Activated T-helper 2 cell treated with anti-CD3 and anti-CD28 coated beads, Interferon-gamma antibody, Interleukin-2, Interleukin-4, amounts not matched to agents 10 μg/mL and 5 μg/mL and 100 μg/mL, durations not matched to agents 14 hours and 24 hours and 36 hours (primary cell): ENCODE measurements at regions of chr12 and their contacts with region 1.

Region 1: GRCh38 chr12:6167327-6168259 is 32.6 kb upstream of the CD9 start:
- DNase-seq: peak; percentile 24
- H3K4me3 Mint-ChIP-seq: no peak overlapping the region
- H3K27ac Mint-ChIP-seq: peak overlapping the region; percentile 93
- H3K4me1 Mint-ChIP-seq: peaks cover 24% of the 10 kb centered on the region
- H3K27me3 Mint-ChIP-seq: peaks cover 5% of the 10 kb centered on the region

Region 2: DNA sequence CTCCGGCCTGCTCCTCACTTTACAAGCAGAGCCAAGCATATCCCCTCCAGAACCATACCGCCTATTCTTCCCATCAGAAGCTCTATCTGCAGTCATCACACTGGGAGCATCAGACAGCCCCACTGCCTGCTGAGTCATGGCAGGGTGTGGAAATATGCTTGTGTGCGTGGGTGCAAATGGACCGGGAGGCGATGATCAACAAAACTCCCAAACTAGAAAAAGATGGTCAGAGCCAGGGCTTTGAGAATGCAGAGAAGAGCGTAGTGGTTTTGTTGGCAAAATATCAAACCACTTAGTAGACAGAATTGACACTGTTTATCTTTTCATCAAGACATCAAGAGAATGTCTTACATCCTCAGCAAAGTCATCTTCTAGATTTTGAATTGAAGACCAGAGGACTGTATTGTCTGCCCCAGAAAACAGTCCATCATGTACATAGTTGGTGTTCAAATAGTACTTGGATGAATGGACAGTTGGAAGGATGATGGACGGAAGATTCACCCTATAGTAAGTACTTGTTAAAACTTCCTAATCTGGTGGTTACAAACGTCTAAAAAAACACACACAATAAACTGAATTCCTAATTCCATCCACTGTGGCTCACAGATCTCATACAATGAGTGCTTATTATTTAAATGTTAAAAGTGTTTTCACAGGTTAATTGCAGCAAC is 98.0 kb before region 1 on chr12:
- intact Hi-C with region 1: loop called (anchors 2 kb)
- DNase-seq: no peak
- H3K4me3 Mint-ChIP-seq: no peak overlapping the region
- H3K27ac Mint-ChIP-seq: peak overlapping the region; percentile 74
- H3K4me1 Mint-ChIP-seq: peaks cover 26% of the 10 kb centered on the region
- H3K27me3 Mint-ChIP-seq: peaks cover 52% of the 10 kb centered on the region

Region 3: GRCh38 chr12:6145564-6145963 is 22.0 kb before region 1 on chr12:
- intact Hi-C with region 1: no loop called
- DNase-seq: no peak
- H3K4me3 Mint-ChIP-seq: no peak overlapping the region
- H3K27ac Mint-ChIP-seq: no peak overlapping the region
- H3K4me1 Mint-ChIP-seq: peaks cover 17% of the 10 kb centered on the region
- H3K27me3 Mint-ChIP-seq: no peaks in the 10 kb centered on the region

Region 4: GRCh38 chr12:6205144-6205539 is 37.5 kb after region 1 on chr12:
- intact Hi-C with region 1: no loop called
- DNase-seq: no peak
- H3K4me3 Mint-ChIP-seq: no peak overlapping the region
- H3K27ac Mint-ChIP-seq: no peak overlapping the region
- H3K4me1 Mint-ChIP-seq: peaks cover 9% of the 10 kb centered on the region
- H3K27me3 Mint-ChIP-seq: peaks cover 22% of the 10 kb centered on the region

Region 5: GRCh38 chr12:6443361-6443983 is 275.9 kb after region 1 on chr12:
- intact Hi-C with region 1: no loop called
- DNase-seq: no peak
- H3K4me3 Mint-ChIP-seq: peak overlapping the region; percentile 65
- H3K27ac Mint-ChIP-seq: peak overlapping the region; percentile 91
- H3K4me1 Mint-ChIP-seq: peaks cover 59% of the 10 kb centered on the region
- H3K27me3 Mint-ChIP-seq: no peaks in the 10 kb centered on the region